Motor neuron (in vitro differentiated cells): ENCODE measurements at regions of chr1 and their contacts with region 1.

Region 1: DNA sequence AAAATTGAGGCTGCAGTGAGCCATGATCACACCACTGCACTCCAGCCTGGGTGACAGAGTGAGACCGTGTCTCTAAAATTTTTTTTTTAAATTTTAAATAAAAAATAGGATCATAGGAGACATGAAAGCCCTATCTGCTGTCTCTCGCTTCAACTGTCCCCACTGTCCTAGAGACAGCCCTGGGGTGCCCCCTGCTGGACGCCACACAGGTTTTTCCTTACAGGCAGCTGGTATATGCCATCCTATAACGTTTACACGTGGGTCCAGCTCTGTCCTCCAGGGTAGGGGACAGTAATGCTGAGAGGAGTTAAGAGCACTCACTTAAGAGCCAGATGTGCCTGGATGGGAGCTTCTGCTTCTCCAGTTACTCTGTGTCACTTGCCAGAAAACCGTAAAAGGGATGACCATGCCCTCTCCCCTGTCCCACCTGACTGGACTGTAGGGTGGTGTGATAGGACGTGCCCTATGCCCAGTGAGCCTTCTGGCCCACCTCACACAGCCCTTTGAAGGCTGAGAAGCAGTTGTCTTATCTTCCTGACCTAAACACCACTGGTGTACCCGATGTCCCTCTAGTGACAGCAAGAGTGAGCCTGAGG is 8.5 kb downstream of the FBXO2 start:
- ATAC-seq: peak; percentile 30 to 65 (median 56)
- H3K4me3 ChIP-seq: no peak overlapping the region
- H3K27ac ChIP-seq: no peak overlapping the region
- H3K4me1 ChIP-seq: peaks cover 2 to 10% of the 10 kb centered on the region in 2 donors

Region 2: DNA sequence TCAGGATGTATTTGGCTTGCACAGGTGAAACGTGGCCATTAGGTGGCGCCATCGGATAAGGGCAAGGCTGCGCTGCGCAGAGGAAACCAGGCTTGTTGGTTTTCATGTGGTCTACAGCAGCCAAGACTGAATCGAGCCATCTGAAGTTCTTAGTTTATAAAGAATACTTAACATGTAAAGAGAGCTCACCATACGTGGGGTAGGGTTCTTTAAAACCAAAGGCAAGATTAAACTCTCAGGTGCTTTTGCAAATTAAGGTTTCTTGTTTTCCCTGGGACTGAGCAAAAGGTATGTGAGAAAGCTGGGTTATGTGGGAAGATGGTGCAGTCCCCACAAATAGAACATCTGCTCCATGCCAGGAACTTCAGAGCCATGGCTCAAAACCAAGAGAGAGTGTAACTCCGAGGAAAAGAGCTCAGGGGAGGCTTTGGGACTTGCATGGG is 608.0 kb before region 1 on chr1:
- in situ Hi-C with region 1: loop called in 5 of 9 experiments (anchors 10 to 25 kb)
- ATAC-seq: peak; percentile 91 to 99 (median 94)
- H3K4me3 ChIP-seq: no peak overlapping the region
- H3K27ac ChIP-seq: no peak overlapping the region
- H3K4me1 ChIP-seq: no peaks in the 10 kb centered on the region

Region 3: GRCh38 chr1:11227106-11228077 is 418.4 kb before region 1 on chr1:
- in situ Hi-C with region 1: loop called in 4 of 9 experiments (anchors 25 kb)
- ATAC-seq: peak in 1 of 8 experiments; percentile 28
- H3K4me3 ChIP-seq: no peak overlapping the region
- H3K27ac ChIP-seq: no peak overlapping the region
- H3K4me1 ChIP-seq: no peaks in the 10 kb centered on the region

Region 4: GRCh38 chr1:11320153-11320936 is 325.4 kb before region 1 on chr1:
- in situ Hi-C with region 1: loop called in 4 of 9 experiments (anchors 25 kb)
- ATAC-seq: peak in 6 of 8 experiments; percentile 21 to 74 (median 54)
- H3K4me3 ChIP-seq: no peak overlapping the region
- H3K27ac ChIP-seq: no peak overlapping the region
- H3K4me1 ChIP-seq: peaks cover 33 to 38% of the 10 kb centered on the region in 2 donors

Region 5: DNA sequence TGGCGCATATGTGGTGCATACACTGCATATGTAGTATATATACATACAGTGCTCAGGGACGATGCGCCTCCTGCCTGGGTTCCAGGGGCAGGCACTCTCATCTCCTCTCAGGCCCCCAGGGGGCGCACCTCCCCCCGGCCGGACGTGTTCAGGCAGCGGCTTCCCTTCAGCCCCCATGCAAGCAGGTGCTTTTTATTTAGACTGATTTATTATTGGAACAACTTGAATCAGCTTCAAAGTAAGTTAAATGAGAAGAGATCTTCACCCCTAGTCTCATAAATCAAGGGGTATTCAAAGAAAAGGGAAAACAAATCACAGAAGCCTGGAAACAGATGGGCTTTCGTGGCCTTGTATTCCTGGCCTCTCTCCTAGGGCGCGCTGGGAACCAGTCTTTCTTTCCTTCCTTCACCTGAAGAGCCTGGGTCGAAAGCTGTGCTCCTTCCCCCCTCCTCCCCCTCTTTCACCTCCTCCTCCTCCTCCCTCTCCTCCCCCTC is 308.1 kb before region 1 on chr1:
- in situ Hi-C with region 1: loop called in 2 of 9 experiments (anchors 25 kb)
- ATAC-seq: peak; percentile 42 to 85 (median 60)
- H3K4me3 ChIP-seq: no peak overlapping the region
- H3K27ac ChIP-seq: no peak overlapping the region
- H3K4me1 ChIP-seq: peaks cover 56 to 76% of the 10 kb centered on the region in 2 donors

Region 6: DNA sequence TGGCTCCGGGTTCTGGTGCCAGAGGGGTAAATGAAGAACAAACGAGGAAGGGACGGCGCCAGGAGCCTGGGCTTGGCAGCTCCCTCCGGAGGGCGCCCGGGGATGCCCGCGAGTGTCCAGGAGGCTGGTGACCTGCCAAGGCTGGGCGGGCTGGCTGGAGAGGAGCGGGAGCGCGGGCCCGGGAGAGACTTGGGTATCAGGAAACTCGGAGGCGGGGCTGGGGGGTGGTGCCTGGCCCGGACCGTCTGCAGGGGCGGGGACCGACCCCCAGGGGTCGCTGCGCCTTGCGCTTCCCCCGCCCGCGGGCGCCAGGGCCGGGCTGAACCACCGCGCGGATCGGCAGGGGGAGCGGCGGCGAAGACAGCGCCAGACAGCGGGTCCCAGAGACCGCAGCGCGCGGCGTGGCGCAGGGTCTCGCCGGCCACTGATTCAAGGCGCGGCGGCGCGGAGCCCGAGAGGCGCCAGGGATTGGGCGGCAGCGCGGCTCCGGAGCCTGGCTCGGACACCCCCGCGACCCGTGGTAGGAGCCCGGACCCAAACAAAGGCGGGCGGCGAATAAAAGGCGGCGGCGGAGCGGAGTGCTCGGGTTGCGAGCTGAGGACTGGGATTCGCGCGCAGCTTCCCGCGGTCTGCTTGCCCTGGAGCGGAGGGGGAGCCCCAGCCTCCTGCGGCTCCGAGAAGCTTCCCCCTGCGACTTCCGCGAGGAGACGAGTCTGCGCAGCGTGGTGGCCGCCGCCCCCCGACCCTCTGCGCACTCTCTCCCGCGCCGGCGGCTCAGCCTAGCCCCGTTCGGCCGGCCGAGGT is 167.0 kb before region 1 on chr1 and contains the start of gene DISP3:
- in situ Hi-C with region 1: loop called in 1 of 9 experiments (anchors 25 kb)
- ATAC-seq: peak; percentile 82 to 90 (median 86)
- H3K4me3 ChIP-seq: peak within 1 kb of the TSS; percentile 48 to 69 (median 56)
- H3K27ac ChIP-seq: peak within 1 kb of the TSS; percentile 97
- H3K4me1 ChIP-seq: peaks cover 36 to 37% of the 10 kb centered on the region in 2 donors
- total RNA-seq, gene DISP3: 0.18 to 23.4 (median 8.5) TPM

Region 7: GRCh38 chr1:11719313-11720032 is 73.7 kb after region 1 on chr1:
- in situ Hi-C with region 1: loop called in 1 of 9 experiments (anchors 10 kb)
- ATAC-seq: peak; percentile 67 to 84 (median 78)
- H3K4me3 ChIP-seq: no peak overlapping the region
- H3K27ac ChIP-seq: peak overlapping the region; percentile 17
- H3K4me1 ChIP-seq: peaks cover 15 to 19% of the 10 kb centered on the region in 2 donors